Caco-2 (cell line): ENCODE measurements at regions of chr3 and their contacts with region 1.

Region 1: GRCh38 chr3:146189519-146190173 is 28.7 kb upstream of the PLOD2 start:
- DNase-seq: peak in 1 of 2 experiments; percentile 43
- H3K4me3 ChIP-seq: no peak overlapping the region
- H3K4me3 Mint-ChIP-seq: no peak overlapping the region
- H3K27ac Mint-ChIP-seq: no peak overlapping the region
- H3K4me1 ChIP-seq: no peaks in the 10 kb centered on the region
- H3K4me1 Mint-ChIP-seq: no peaks in the 10 kb centered on the region
- H3K27me3 ChIP-seq: no peaks in the 10 kb centered on the region
- H3K27me3 Mint-ChIP-seq: no peaks in the 10 kb centered on the region
- CTCF ChIP-seq: peak; percentile 71 to 81

Region 2: GRCh38 chr3:145776782-145777408 is 412.8 kb before region 1 on chr3:
- CTCF ChIA-PET with region 1: interaction called, 6 read pairs
- POLR2A ChIA-PET with region 1: no interaction called
- intact Hi-C with region 1: loop called (anchors 2 kb)
- DNase-seq: peak in 1 of 2 experiments; percentile 66
- H3K4me3 ChIP-seq: no peak overlapping the region
- H3K4me3 Mint-ChIP-seq: no peak overlapping the region
- H3K27ac Mint-ChIP-seq: no peak overlapping the region
- H3K4me1 ChIP-seq: no peaks in the 10 kb centered on the region
- H3K4me1 Mint-ChIP-seq: peaks cover 2% of the 10 kb centered on the region
- H3K27me3 ChIP-seq: no peaks in the 10 kb centered on the region
- H3K27me3 Mint-ChIP-seq: peaks cover 8% of the 10 kb centered on the region
- CTCF ChIP-seq: peak; percentile 54 to 68

Region 3: DNA sequence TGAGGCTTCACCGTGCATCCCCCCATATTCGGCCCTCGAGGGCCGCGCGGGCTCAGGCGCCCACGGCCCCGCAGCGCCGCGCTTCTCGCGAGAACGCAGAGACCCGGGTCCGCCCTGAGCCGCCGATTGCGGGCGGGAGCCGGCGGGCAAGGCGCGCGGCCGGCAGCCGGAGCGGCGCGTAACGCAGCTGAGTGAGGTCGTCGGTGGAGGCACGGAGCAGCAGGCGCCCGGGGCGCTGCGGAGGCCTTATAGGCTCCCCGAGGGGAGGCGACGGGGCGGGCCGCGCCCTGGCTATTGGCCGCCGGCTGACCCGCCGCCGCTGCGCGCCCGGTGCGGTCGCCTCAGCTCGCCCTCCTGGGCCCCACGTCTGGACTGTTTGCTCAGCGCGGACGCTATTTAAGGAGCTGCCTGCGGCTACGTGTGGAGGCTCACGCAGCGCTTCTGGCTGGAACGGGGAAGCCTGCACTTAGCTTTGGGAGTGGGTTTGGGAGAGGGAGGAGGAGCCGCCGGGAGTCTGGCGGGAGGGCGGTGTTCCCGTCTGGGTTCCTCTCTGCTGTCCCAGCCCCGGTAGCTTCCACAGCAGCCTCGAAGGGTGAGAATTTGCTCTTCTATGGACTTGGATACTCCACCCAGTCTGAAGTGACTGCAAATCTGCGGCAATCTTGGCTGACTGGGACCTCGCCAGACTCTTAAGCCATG is 28.5 kb before region 1 on chr3 and contains the start of gene PLOD2:
- CTCF ChIA-PET with region 1: interaction called, 13 read pairs
- POLR2A ChIA-PET with region 1: no interaction called
- intact Hi-C with region 1: loop called (anchors 1 kb)
- DNase-seq: peak; percentile 90 to 91
- H3K4me3 ChIP-seq: peak within 1 kb of the TSS; percentile 92
- H3K4me3 Mint-ChIP-seq: peak within 1 kb of the TSS; percentile 80
- H3K27ac Mint-ChIP-seq: peak within 1 kb of the TSS; percentile 81
- H3K4me1 ChIP-seq: no peaks in the 10 kb centered on the region
- H3K4me1 Mint-ChIP-seq: peaks cover 29% of the 10 kb centered on the region
- H3K27me3 ChIP-seq: no peaks in the 10 kb centered on the region
- H3K27me3 Mint-ChIP-seq: no peaks in the 10 kb centered on the region
- CTCF ChIP-seq: no peak
- total RNA-seq, gene PLOD2: 49.4 and 53.1 TPM in 2 replicates

Region 4: DNA sequence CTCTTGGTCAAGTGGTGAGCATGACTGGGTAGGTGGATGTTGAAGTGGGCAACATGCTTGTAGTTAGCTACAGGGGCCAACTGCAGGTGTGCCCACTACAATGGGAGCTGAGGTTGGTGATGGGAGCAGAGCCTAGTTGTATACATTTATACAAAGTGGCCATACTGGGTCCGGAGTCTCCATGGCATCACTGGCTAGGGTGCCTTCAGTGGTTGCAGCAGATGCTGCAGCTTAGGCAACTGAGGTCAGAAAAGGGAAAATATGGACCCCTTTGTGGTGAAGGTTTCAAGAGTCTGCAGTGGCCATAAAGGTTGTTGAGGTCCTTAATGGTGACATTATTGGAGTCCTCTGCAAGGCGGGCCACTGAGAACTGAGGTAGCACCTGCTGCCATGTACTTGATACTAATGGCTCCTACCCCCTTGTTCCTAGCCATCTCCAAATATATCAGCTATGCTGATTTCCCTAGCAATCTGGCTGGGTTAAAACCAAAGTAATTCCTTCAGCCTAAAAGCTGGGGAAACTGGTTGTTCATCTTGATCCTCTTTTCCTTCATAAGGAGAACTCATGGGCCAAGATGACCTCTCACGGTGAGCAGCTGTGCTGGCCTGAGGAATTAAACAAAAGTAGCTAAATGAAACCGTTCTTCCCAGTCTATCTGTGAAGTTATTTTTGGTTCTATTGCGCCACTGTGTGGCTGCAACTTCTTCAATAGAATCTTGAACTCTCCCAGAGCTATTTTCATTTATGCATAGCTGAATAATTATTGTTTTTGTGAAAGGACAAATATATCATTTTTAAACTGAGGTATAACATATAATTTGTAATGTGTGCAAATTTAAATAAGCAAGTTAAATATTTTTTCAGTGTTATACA is 137.3 kb after region 1 on chr3:
- CTCF ChIA-PET with region 1: interaction called, 86 read pairs
- POLR2A ChIA-PET with region 1: no interaction called
- intact Hi-C with region 1: loop called (anchors 1 kb)
- DNase-seq: peak; percentile 39 to 42
- H3K4me3 ChIP-seq: no peak overlapping the region
- H3K4me3 Mint-ChIP-seq: no peak overlapping the region
- H3K27ac Mint-ChIP-seq: no peak overlapping the region
- H3K4me1 ChIP-seq: no peaks in the 10 kb centered on the region
- H3K4me1 Mint-ChIP-seq: peaks cover 6% of the 10 kb centered on the region
- H3K27me3 ChIP-seq: no peaks in the 10 kb centered on the region
- H3K27me3 Mint-ChIP-seq: no peaks in the 10 kb centered on the region
- CTCF ChIP-seq: peak; percentile 42

Region 5: DNA sequence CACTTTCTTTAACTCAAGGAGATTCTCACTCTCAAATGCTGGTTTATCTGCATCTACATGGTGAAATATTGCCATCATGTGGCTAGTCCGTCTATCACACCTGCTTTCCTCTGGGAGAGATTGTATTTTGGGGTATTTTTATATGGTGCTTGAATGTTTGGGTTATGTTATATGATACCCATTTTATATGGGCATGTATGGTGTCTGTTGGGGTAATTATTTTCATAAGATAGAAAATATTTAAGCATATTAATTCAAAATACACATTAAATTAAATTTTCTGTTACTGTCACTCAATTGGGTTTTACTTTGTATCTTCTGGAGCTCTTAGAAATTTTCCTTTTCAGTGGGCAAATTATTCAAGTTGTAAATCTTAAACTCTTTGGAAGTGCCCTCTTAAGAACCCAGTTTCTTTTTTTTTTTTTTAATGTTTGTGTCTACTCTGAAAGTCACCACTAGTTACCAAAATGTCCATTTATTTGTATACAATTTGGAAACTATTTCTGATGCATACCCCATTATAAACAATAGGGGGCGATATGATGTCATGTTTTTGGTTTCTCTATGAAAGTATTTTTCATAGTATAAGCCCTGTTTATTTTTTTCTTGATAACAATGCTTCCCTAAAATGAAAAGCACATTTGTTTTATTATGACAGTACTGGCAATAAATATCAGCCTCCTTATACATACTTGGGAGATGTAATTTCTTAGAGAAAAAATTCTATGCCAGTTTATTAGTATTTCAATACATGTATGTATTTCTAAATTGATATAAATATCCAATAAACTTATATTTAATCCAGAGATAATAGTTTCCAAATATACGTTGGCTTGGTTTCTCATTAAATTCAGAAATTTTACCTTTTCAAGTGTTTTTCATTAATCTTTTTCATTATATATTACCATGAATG is 451.6 kb after region 1 on chr3:
- CTCF ChIA-PET with region 1: no interaction called
- POLR2A ChIA-PET with region 1: no interaction called
- intact Hi-C with region 1: loop called (anchors 2 kb)
- DNase-seq: peak in 1 of 2 experiments; percentile 34
- H3K4me3 ChIP-seq: no peak overlapping the region
- H3K4me3 Mint-ChIP-seq: no peak overlapping the region
- H3K27ac Mint-ChIP-seq: no peak overlapping the region
- H3K4me1 ChIP-seq: peaks cover 6% of the 10 kb centered on the region
- H3K4me1 Mint-ChIP-seq: no peaks in the 10 kb centered on the region
- H3K27me3 ChIP-seq: no peaks in the 10 kb centered on the region
- H3K27me3 Mint-ChIP-seq: no peaks in the 10 kb centered on the region
- CTCF ChIP-seq: peak; percentile 33 to 54